ENCODE measurements at regions of chr14 and their contacts with region 1.

Region 1: GRCh38 chr14:21455911-21456667 is at the start of gene CHD8:
- DNase-seq: peak; percentile 94 to 100 (median 99)
- ATAC-seq: peak; percentile 95 to 98 (median 97)
- H3K4me3 ChIP-seq: peak within 1 kb of the TSS; percentile 87 to 92
- H3K4me3 Mint-ChIP-seq: peak within 1 kb of the TSS; percentile 93 to 95 (median 93)
- H3K27ac ChIP-seq: peak within 1 kb of the TSS; percentile 85
- H3K27ac Mint-ChIP-seq: peak within 1 kb of the TSS; percentile 98 to 99
- H3K4me1 ChIP-seq: peaks cover 10 to 36% of the 10 kb centered on the region in 2 experiments
- H3K4me1 Mint-ChIP-seq: peaks cover 33 to 51% (median 39%) of the 10 kb centered on the region in 3 donors
- H3K27me3 ChIP-seq: no peaks in the 10 kb centered on the region
- H3K27me3 Mint-ChIP-seq: no peaks in the 10 kb centered on the region
- total RNA-seq, gene CHD8: 125 to 133 (median 131) TPM

Region 2: GRCh38 chr14:21029917-21030316 is 426.2 kb before region 1 on chr14 and contains the start of gene TPPP2:
- CTCF ChIA-PET with region 1: interaction called in 1 of 2 experiments, 13 read pairs
- POLR2A ChIA-PET with region 1: no interaction called
- DNase-seq: no peak
- ATAC-seq: no peak
- H3K4me3 ChIP-seq: no peak within 1 kb of the TSS
- H3K4me3 Mint-ChIP-seq: no peak within 1 kb of the TSS
- H3K27ac ChIP-seq: no peak within 1 kb of the TSS
- H3K27ac Mint-ChIP-seq: no peak within 1 kb of the TSS
- H3K4me1 ChIP-seq: peaks cover 0 to 9% of the 10 kb centered on the region in 2 experiments
- H3K4me1 Mint-ChIP-seq: peaks cover 0 to 2% (median 1%) of the 10 kb centered on the region in 3 donors
- H3K27me3 ChIP-seq: peaks cover 0 to 14% of the 10 kb centered on the region in 2 experiments
- H3K27me3 Mint-ChIP-seq: no peaks in the 10 kb centered on the region
- total RNA-seq, gene TPPP2: not detected

Region 3: GRCh38 chr14:21437063-21437901 is 18.8 kb before region 1 on chr14:
- CTCF ChIA-PET with region 1: interaction called, 4 to 100 read pairs
- POLR2A ChIA-PET with region 1: interaction called, 21 to 48 read pairs
- DNase-seq: peak; percentile 95 to 100 (median 99)
- ATAC-seq: peak; percentile 98 to 100 (median 99)
- H3K4me3 ChIP-seq: peak overlapping the region; percentile 79 to 91
- H3K4me3 Mint-ChIP-seq: peak overlapping the region; percentile 85 to 93 (median 88)
- H3K27ac ChIP-seq: peak overlapping the region; percentile 92
- H3K27ac Mint-ChIP-seq: peak overlapping the region; percentile 87 to 93
- H3K4me1 ChIP-seq: peaks cover 12 to 20% of the 10 kb centered on the region in 2 experiments
- H3K4me1 Mint-ChIP-seq: peaks cover 69 to 85% (median 71%) of the 10 kb centered on the region in 3 donors
- H3K27me3 ChIP-seq: no peaks in the 10 kb centered on the region
- H3K27me3 Mint-ChIP-seq: no peaks in the 10 kb centered on the region

Region 4: GRCh38 chr14:21476925-21477681 is 21.0 kb after region 1 on chr14 and contains the starts of genes RAB2B and TOX4:
- CTCF ChIA-PET with region 1: interaction called, 3 to 24 read pairs
- POLR2A ChIA-PET with region 1: interaction called in 1 of 2 experiments, 17 read pairs
- DNase-seq: peak; percentile 86 to 99 (median 95)
- ATAC-seq: peak; percentile 94 to 99 (median 97)
- H3K4me3 ChIP-seq: peak within 1 kb of the TSS; percentile 77 to 95
- H3K4me3 Mint-ChIP-seq: peak within 1 kb of the TSS; percentile 97 to 100 (median 100)
- H3K27ac ChIP-seq: peak within 1 kb of the TSS; percentile 89
- H3K27ac Mint-ChIP-seq: peak within 1 kb of the TSS; percentile 99
- H3K4me1 ChIP-seq: peaks cover 15 to 16% of the 10 kb centered on the region in 2 experiments
- H3K4me1 Mint-ChIP-seq: peaks cover 45 to 57% (median 51%) of the 10 kb centered on the region in 3 donors
- H3K27me3 ChIP-seq: no peaks in the 10 kb centered on the region
- H3K27me3 Mint-ChIP-seq: no peaks in the 10 kb centered on the region
- total RNA-seq, gene RAB2B: 23.6 to 33.7 (median 27.6) TPM
- total RNA-seq, gene TOX4: 68.7 to 95.6 (median 78.9) TPM

Region 5: GRCh38 chr14:21510735-21511657 is 54.9 kb after region 1 on chr14 and contains the start of gene METTL3:
- CTCF ChIA-PET with region 1: interaction called in 1 of 2 experiments, 8 read pairs
- POLR2A ChIA-PET with region 1: interaction called in 1 of 2 experiments, 10 read pairs
- DNase-seq: peak; percentile 84 to 98 (median 95)
- ATAC-seq: peak; percentile 99 to 100 (median 100)
- H3K4me3 ChIP-seq: peak within 1 kb of the TSS; percentile 78 to 89
- H3K4me3 Mint-ChIP-seq: peak within 1 kb of the TSS; percentile 98 to 99 (median 99)
- H3K27ac ChIP-seq: peak within 1 kb of the TSS; percentile 85
- H3K27ac Mint-ChIP-seq: peak within 1 kb of the TSS; percentile 96 to 98
- H3K4me1 ChIP-seq: peaks cover 14 to 25% of the 10 kb centered on the region in 2 experiments
- H3K4me1 Mint-ChIP-seq: peaks cover 40 to 45% (median 41%) of the 10 kb centered on the region in 3 donors
- H3K27me3 ChIP-seq: peaks cover 0 to 2% of the 10 kb centered on the region in 2 experiments
- H3K27me3 Mint-ChIP-seq: no peaks in the 10 kb centered on the region
- total RNA-seq, gene METTL3: 48.0 to 94.6 (median 91.6) TPM

Region 6: DNA sequence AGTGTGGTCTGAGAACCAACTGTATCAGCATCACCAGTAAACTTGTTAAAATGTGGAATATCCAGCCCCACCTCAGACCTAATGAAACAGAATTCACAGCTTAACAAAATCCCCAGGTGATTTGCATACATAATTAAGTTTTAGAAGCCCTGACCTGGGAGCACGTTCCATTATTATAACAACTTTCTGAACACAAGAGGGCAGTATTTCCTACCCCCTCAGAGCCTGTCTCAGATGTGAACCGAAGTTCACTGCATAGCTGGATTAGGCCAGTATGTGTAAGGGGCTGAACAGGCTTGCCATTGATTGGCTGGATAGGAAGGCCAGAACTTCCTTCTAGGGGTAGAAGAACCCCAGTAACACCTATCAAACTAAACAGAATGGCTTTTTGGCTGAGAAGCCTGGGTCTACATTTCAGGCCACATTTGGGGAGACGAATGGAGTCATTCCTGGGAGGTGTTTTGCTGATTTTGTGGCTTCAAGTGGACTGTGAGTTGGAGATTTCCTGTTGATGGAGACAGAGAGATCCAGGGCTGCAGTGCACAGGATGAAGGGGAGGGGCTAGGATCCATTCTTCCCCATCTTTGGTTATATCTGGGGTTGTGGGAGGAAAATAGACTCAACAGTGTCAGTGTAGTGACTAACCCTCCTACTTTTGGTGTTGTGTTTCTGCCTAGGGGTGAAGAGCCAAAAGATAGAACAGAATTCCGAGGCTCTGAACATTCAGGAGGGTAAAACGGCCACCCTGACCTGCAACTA is 312.2 kb after region 1 on chr14:
- CTCF ChIA-PET with region 1: no interaction called
- POLR2A ChIA-PET with region 1: no interaction called
- DNase-seq: peak in 7 of 35 experiments; percentile 5 to 66 (median 13)
- ATAC-seq: peak; percentile 63 to 91 (median 78)
- H3K4me3 ChIP-seq: peak overlapping the region in 1 of 2 donors; percentile 2
- H3K4me3 Mint-ChIP-seq: peak overlapping the region; percentile 61 to 71 (median 66)
- H3K27ac ChIP-seq: no peak overlapping the region
- H3K27ac Mint-ChIP-seq: peak overlapping the region; percentile 46 to 61
- H3K4me1 ChIP-seq: no peaks in the 10 kb centered on the region
- H3K4me1 Mint-ChIP-seq: peaks cover 4 to 5% (median 5%) of the 10 kb centered on the region in 3 donors
- H3K27me3 ChIP-seq: no peaks in the 10 kb centered on the region
- H3K27me3 Mint-ChIP-seq: peaks cover 7 to 15% of the 10 kb centered on the region in 2 donors